Caco-2 (cell line): ENCODE measurements at regions of chr14 and their contacts with region 1.

Region 1: GRCh38 chr14:55051426-55052268 is at the start of gene MAPK1IP1L:
- DNase-seq: peak; percentile 93 to 97
- H3K4me3 ChIP-seq: peak within 1 kb of the TSS; percentile 93
- H3K4me3 Mint-ChIP-seq: peak within 1 kb of the TSS; percentile 88
- H3K27ac Mint-ChIP-seq: peak within 1 kb of the TSS; percentile 89
- H3K4me1 ChIP-seq: peaks cover 11% of the 10 kb centered on the region; the same call in 1 of the 2 replicates
- H3K4me1 Mint-ChIP-seq: peaks cover 11% of the 10 kb centered on the region
- H3K27me3 ChIP-seq: no peaks in the 10 kb centered on the region
- H3K27me3 Mint-ChIP-seq: no peaks in the 10 kb centered on the region
- CTCF ChIP-seq: peak; percentile 85 to 94
- total RNA-seq, gene MAPK1IP1L: 81.8 and 90.8 TPM in 2 replicates

Region 2: DNA sequence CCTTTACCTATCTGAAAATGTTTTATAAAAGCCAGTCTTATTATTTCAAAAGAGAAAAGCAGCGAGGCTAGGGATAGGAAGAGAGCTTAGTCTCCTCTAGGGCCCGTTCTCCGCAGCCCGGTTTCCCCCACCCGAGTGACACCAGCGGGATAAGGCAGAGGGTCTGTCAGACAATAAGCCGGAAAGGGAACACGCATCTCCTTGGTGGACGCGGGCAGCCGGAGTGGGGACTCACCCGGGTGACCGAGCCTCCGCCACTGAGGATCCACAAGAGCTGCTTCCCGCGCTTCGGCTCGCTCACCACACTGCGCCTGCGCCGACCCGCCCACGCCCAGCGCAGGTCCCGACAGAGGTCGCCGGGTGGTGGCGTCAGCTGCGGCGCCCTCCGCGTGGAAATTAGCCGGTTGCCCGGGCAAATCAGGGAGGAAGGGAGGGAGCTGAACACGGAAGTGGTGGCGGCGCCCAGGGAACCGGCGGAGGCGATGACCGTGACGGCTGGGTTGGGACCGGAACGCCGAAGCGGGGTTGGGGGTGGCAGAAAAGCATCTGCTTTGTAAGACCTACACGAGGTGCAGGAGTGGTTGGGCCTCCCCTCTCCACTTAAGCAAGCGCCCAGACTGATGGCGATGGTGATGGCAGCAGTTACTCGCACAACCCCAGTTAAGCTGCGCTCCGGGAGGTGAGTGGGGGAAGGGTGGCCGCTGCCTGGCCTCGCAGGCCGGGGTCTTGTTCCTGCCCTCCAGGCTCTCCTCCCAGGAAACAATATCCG is 24.7 kb before region 1 on chr14 and contains the starts of genes SOCS4 and WDHD1:
- CTCF ChIA-PET with region 1: interaction called, 5 read pairs
- POLR2A ChIA-PET with region 1: interaction called, 35 read pairs
- intact Hi-C with region 1: loop called (anchors 1 kb)
- DNase-seq: peak; percentile 96 to 98
- H3K4me3 ChIP-seq: peak within 1 kb of the TSS; percentile 86
- H3K4me3 Mint-ChIP-seq: peak within 1 kb of the TSS; percentile 73
- H3K27ac Mint-ChIP-seq: peak within 1 kb of the TSS; percentile 79
- H3K4me1 ChIP-seq: peaks cover 42% of the 10 kb centered on the region
- H3K4me1 Mint-ChIP-seq: peaks cover 35% of the 10 kb centered on the region
- H3K27me3 ChIP-seq: no peaks in the 10 kb centered on the region
- H3K27me3 Mint-ChIP-seq: no peaks in the 10 kb centered on the region
- CTCF ChIP-seq: no peak
- total RNA-seq, gene SOCS4: 21.1 and 24.8 TPM in 2 replicates
- total RNA-seq, gene WDHD1: 25.5 and 27.5 TPM in 2 replicates

Region 3: GRCh38 chr14:55102141-55102621 is 50.5 kb after region 1 on chr14:
- CTCF ChIA-PET with region 1: interaction called, 7 read pairs
- POLR2A ChIA-PET with region 1: interaction called, 10 read pairs
- intact Hi-C with region 1: no loop called
- DNase-seq: peak in 1 of 2 experiments; percentile 28
- H3K4me3 ChIP-seq: peak overlapping the region; percentile 37
- H3K4me3 Mint-ChIP-seq: peak overlapping the region; percentile 91
- H3K27ac Mint-ChIP-seq: peak overlapping the region; percentile 99
- H3K4me1 ChIP-seq: peaks cover 35% of the 10 kb centered on the region
- H3K4me1 Mint-ChIP-seq: peaks cover 25% of the 10 kb centered on the region
- H3K27me3 ChIP-seq: no peaks in the 10 kb centered on the region
- H3K27me3 Mint-ChIP-seq: no peaks in the 10 kb centered on the region
- CTCF ChIP-seq: no peak

Region 4: GRCh38 chr14:55122509-55122953 is 70.9 kb after region 1 on chr14:
- CTCF ChIA-PET with region 1: interaction called, 3 read pairs
- POLR2A ChIA-PET with region 1: interaction called, 13 read pairs
- intact Hi-C with region 1: no loop called
- DNase-seq: peak; percentile 67 to 84
- H3K4me3 ChIP-seq: no peak overlapping the region
- H3K4me3 Mint-ChIP-seq: peak overlapping the region; percentile 59
- H3K27ac Mint-ChIP-seq: peak overlapping the region; percentile 90
- H3K4me1 ChIP-seq: peaks cover 90% of the 10 kb centered on the region
- H3K4me1 Mint-ChIP-seq: peaks cover 58% of the 10 kb centered on the region
- H3K27me3 ChIP-seq: no peaks in the 10 kb centered on the region
- H3K27me3 Mint-ChIP-seq: no peaks in the 10 kb centered on the region
- CTCF ChIP-seq: no peak